Lower leg skin (tissue), 4 donors: ENCODE measurements at regions of chr10 and their contacts with region 1.

Region 1: DNA sequence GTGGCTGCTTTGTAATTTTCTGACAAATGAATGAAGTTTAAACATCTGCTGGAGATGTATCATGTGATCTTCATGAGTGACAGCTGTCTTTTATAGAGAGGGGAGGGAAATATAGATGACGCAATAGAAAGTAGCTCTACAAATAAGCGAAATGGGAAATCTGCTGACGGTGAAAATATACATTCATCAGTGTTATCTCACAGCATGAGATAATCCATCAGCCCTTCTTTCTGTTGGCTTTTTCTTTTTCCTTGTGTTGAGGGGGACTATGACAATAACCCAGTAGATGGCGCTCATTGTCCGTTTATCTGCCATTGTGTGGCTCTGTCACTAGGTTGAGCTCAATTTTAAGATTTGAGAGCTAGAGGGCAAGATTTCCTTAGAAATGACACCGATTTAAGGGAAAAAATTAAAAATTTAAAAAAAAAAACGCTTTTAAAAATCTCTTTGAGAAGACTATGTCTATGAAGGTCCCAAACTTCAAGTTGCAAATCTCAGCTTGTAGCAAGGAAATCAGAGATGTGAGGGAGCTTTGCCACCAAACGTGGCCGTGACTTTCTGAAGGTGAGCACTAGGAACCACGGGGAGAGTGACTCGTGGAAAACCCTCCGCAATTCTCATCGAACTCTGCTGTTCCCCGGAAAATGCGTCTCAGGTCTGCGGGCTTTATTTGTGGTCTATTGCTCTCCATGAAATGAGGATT is 114.6 kb upstream of the SFMBT2 start:
- DNase-seq: peak in 1 of 2 donors; percentile 63
- H3K4me3 ChIP-seq: no peak overlapping the region
- CTCF ChIP-seq: peak in 1 of 3 donors; percentile 35
- POLR2A ChIP-seq: no peak

Region 2: DNA sequence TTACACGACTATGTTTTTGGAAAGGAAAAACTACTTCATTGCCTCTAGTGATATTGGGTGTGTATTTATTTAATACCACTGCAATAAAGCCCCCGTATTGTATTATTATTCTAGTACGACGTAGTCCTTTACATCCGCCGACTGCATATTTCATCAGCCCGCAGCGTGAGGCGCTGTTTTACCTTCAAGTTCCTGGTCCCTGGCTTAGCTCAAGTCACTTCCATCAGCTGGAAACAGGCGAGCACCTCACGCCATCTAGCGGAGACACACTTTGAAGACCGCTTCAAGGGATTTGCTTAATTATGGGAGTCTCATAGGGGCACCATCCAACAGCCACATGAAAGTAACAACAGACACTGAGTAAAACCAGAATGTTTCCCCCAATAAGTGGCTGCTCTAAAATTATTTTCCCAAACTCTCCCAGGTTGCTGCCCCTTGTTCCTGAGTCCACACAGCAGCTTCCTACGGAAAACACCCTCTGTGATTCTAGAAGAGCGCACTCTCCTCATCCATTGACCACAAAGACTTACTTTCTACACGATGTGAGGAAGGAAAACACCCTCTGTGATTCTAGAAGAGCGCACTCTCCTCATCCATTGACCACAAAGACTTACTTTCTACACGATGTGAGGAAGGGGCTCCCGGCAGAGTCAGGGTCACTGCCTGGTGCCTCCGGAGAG is 161.9 kb after region 1 on chr10:
- intact Hi-C with region 1: loop called (anchors 5 kb)
- DNase-seq: peak; percentile 82 to 95
- H3K4me3 ChIP-seq: no peak overlapping the region
- CTCF ChIP-seq: peak in 1 of 3 donors; percentile 81
- POLR2A ChIP-seq: no peak

Region 3: DNA sequence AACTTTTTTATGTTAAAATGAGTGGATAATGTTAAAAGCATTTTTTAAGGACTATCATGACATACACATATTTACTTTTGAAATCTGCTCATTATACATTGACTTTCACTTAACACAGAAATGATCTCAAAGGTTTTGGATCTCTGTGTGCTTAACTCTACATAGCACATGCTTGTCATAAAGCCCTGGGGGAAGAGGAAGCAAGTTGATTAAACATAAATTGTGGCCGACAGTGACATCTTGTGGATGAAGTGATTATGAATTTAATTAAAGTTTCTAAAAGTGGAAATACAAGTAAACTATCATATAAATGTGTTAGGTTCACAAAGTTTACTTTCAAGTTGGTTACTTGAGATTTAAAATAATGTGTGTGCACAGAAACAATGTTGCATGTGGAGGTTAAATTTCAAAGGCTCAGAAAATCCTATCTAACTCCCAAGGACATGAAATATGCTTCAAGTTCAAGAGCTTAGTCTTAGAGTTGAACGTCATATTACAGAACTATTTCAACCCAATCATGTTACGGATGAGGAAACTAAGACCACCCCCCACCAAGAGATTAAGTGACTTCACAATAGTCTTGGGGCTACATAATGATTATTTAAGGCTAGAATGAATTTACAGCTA is 1776.8 kb after region 1 on chr10:
- intact Hi-C with region 1: loop called (anchors 10 kb)
- DNase-seq: no peak
- H3K4me3 ChIP-seq: no peak overlapping the region
- CTCF ChIP-seq: no peak
- POLR2A ChIP-seq: no peak